Activated CD4-positive, alpha-beta T cell treated with anti-CD3 and anti-CD28 coated beads, Interleukin-2, amount 10 ng/mL, durations not matched to agents 24 days and 14 days (primary cell): ENCODE measurements at regions of chr14 and their contacts with region 1.

Region 1: DNA sequence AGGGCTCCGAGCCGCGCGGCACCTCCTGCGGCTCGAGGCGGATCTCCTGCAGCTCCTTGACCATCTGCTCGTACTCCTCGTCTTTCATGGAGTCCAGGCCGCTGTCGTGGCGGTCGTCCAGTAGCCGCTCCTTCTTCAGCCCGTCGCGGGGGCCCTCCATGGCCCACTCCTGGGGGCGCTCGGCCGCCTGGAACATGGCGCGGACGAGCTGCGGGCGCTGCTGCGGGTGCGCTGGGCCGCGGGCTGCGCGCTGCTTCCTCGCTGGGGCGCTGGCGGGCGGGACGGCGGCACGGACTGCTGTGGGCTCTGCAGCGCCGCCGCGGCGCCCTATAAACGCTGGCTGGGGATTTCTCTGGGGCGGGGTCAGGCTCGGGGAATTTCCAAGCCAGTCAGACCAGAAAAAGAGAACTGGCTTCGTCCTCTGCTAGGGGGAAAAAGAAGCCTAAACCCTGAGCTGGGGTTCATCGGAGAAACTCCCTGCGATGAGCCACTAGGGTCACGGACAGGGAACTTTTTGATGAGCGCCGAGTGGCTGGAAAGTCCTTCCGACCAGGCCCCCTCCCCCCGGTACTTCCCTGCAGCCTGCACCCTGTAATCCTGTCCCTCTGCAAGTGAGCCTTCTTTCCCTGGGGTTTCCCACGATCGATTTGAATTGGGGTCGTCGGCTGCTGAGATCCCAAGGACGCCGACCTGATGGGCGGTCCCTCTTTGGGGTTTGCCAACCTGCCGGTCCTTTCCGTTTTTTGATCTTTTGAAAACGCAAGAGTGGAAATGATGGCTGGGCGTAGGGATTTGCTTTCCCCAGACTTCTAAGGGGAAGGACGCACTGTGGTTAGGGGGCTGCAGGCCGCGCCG is at the start of gene NFKBIA:
- DNase-seq: peak; percentile 99
- H3K4me3 Mint-ChIP-seq: peak within 1 kb of the TSS; percentile 97
- H3K27ac Mint-ChIP-seq: peak within 1 kb of the TSS; percentile 99
- H3K4me1 Mint-ChIP-seq: peaks cover 42% of the 10 kb centered on the region
- H3K27me3 Mint-ChIP-seq: no peaks in the 10 kb centered on the region
- total RNA-seq, gene NFKBIA: 506 and 534 TPM in 2 replicates

Region 2: DNA sequence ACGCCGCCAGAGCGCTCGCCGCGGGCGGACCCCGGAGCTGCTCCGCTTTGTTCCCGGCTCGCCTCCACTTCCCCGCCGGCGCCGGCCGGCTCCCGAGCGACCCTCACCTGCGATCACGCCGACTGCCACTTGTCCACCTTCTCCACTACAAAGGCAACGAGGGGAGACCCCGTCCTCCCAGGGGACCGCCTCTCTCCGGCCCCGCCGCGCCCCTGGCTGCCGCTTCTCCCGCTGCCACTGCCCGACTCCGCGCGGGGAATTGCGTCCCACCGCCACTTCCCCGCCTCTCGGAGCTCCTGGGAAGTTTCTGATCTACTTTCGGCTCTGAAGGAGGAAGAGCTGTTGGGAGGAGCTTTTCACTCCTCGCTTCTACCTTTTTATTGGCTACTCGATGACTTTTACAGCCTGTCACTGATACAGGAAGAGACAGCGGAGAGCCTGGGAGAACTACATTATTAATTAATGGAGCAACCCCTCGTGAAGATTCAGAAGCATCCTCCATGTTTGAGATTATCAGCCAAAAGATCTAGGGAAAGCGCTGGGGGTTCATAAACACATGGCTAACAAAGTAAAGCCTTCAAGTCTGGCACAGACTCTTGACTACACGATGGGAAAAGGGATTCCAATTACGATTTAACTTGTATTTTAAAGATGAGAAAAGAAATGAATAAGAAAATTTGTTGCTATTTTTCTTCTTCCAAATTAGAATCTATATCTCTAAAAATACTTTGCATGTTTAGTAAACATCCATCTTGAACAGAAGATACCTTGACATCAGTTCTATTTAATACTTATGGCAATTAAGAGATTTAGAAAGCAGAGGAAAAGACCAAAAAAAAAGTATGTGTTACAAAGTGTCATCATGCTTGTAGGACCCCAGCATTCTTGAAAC is 529.4 kb before region 1 on chr14 and contains the start of gene BAZ1A:
- intact Hi-C with region 1: loop called (anchors 1 kb)
- DNase-seq: peak; percentile 85
- H3K4me3 Mint-ChIP-seq: peak within 1 kb of the TSS; percentile 100
- H3K27ac Mint-ChIP-seq: peak within 1 kb of the TSS; percentile 100
- H3K4me1 Mint-ChIP-seq: peaks cover 23% of the 10 kb centered on the region
- H3K27me3 Mint-ChIP-seq: no peaks in the 10 kb centered on the region
- total RNA-seq, gene BAZ1A: 89.7 TPM in 2 replicates

Region 3: DNA sequence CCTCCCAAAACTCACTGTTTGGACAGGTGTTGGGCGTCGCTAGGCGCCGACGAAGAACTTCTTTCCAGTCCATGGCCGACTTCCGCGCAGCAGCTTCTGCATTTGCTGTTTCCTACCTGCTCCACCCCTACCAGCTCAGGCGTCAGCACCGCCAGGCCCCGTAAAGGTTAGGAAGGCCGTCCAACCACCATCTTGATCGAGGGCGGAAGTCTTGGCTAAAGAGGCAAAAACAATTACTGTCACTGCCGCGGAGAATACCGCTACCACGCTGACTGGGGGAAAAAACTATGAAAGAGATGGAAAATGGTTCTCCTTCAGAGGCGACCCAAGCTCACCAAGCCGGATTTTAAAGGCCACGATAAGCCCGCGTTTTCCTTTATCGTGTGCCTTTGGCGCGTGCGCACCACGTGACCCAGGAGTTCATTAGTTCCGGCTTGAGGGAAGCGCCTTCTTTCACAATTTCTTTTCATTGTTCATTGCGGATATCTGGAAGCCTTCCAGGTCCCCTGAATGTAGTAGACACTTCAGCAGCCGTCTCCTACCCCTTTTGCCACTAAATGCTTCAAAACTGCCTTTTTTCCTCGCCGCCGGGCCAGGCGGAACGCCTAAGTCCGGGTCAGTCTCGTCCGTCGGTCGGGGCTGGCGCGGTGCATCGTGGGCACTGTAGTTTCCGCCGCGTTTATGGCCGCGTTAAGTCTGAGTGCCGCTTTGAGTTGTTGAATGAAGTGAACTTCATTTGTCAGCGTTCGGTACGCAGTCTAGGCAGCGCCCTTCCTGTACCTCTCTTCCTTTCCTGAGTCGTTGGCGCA is 282.6 kb before region 1 on chr14 and contains the starts of genes PPP2R3C and PRORP:
- intact Hi-C with region 1: loop called (anchors 1 kb)
- DNase-seq: peak; percentile 97
- H3K4me3 Mint-ChIP-seq: peak within 1 kb of the TSS; percentile 82
- H3K27ac Mint-ChIP-seq: peak within 1 kb of the TSS; percentile 100
- H3K4me1 Mint-ChIP-seq: peaks cover 56% of the 10 kb centered on the region
- H3K27me3 Mint-ChIP-seq: no peaks in the 10 kb centered on the region
- total RNA-seq, gene PPP2R3C: 51.6 and 58.1 TPM in 2 replicates
- total RNA-seq, gene PRORP: 35.6 and 41.1 TPM in 2 replicates

Region 4: GRCh38 chr14:35229495-35230089 is 175.1 kb before region 1 on chr14:
- intact Hi-C with region 1: loop called (anchors 1 kb)
- DNase-seq: no peak
- H3K4me3 Mint-ChIP-seq: no peak overlapping the region
- H3K27ac Mint-ChIP-seq: peak overlapping the region; percentile 21
- H3K4me1 Mint-ChIP-seq: peaks cover 18% of the 10 kb centered on the region
- H3K27me3 Mint-ChIP-seq: no peaks in the 10 kb centered on the region

Region 5: GRCh38 chr14:35261774-35262173 is 142.9 kb before region 1 on chr14:
- intact Hi-C with region 1: no loop called
- DNase-seq: no peak
- H3K4me3 Mint-ChIP-seq: no peak overlapping the region
- H3K27ac Mint-ChIP-seq: no peak overlapping the region
- H3K4me1 Mint-ChIP-seq: peaks cover 4% of the 10 kb centered on the region
- H3K27me3 Mint-ChIP-seq: no peaks in the 10 kb centered on the region

Region 6: DNA sequence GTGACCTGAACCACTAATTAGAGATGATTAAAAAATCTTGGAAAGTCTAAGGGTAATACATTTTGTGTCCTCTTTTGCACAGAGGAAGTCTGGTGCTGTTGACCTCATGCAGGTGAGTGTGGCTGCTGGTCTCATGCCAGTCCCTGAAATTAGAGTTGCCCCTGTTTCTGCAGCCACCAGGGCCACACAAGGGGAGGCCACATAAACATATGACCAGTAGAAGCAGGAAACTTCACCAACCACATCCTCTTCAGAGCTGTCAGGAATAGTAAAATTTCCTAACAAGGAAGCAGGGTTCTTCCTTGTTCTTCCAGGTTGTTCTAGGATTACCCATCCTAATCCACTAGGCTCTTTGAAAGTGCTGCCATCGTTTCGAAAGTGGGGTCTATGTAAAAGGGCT is 84.2 kb before region 1 on chr14:
- intact Hi-C with region 1: loop called (anchors 1 kb)
- DNase-seq: no peak
- H3K4me3 Mint-ChIP-seq: no peak overlapping the region
- H3K27ac Mint-ChIP-seq: no peak overlapping the region
- H3K4me1 Mint-ChIP-seq: peaks cover 11% of the 10 kb centered on the region
- H3K27me3 Mint-ChIP-seq: no peaks in the 10 kb centered on the region

Region 7: DNA sequence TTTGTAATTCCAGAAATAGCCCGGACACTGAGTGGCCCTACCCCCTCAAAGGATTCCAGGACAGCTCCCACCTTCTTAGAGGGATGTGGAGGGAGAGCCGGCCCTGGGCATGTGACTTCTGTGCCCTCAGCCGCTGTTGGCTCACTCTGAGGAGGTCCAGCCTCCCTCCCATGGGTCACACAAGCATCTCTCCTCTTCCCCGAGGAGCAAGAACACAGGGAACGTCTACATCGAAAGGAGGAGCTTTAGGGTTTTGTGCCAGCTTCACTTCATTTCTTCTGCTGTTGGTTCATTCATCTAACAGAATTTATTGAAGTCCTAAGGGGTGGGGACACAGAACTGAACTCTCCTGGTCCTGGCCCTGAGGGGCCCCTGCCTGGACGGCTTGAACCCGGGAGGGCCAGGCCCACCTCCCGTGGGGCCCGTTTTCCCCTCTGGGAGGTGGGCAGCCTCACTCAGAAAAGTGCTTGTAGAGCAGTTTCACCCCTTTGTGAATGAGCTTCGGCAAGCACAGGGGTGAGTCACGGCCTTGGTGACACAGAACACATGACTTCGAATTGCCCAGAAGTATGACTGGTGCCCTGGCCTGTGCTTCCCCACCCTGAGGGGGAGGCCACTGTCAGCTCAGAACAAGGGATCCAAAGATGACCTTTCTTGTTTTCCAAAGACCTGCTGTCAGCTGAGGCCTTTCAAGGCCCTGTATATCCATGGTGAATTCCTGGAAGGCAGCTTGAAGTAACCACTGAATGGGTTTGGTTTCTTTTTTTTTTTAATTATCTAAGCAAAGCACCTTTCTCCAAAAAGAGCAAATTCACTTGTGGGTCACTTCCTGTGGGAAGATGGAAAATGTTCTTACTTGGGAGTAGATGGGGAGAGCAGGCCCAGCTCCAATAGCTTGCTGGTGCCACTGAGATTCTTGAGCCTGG is 39.3 kb before region 1 on chr14:
- intact Hi-C with region 1: loop called (anchors 1 kb)
- DNase-seq: peak; percentile 84
- H3K4me3 Mint-ChIP-seq: peak overlapping the region; percentile 63
- H3K27ac Mint-ChIP-seq: peak overlapping the region; percentile 89
- H3K4me1 Mint-ChIP-seq: peaks cover 45% of the 10 kb centered on the region
- H3K27me3 Mint-ChIP-seq: no peaks in the 10 kb centered on the region

Region 8: GRCh38 chr14:35458442-35458841 is 53.8 kb after region 1 on chr14:
- intact Hi-C with region 1: no loop called
- DNase-seq: no peak
- H3K4me3 Mint-ChIP-seq: no peak overlapping the region
- H3K27ac Mint-ChIP-seq: no peak overlapping the region
- H3K4me1 Mint-ChIP-seq: peaks cover 3% of the 10 kb centered on the region
- H3K27me3 Mint-ChIP-seq: peaks cover 12% of the 10 kb centered on the region